Activated CD4-positive, alpha-beta T cell treated with anti-CD3 and anti-CD28 coated beads for 36 hours (primary cell): ENCODE measurements at regions of chr6 and their contacts with region 1.

Region 1: DNA sequence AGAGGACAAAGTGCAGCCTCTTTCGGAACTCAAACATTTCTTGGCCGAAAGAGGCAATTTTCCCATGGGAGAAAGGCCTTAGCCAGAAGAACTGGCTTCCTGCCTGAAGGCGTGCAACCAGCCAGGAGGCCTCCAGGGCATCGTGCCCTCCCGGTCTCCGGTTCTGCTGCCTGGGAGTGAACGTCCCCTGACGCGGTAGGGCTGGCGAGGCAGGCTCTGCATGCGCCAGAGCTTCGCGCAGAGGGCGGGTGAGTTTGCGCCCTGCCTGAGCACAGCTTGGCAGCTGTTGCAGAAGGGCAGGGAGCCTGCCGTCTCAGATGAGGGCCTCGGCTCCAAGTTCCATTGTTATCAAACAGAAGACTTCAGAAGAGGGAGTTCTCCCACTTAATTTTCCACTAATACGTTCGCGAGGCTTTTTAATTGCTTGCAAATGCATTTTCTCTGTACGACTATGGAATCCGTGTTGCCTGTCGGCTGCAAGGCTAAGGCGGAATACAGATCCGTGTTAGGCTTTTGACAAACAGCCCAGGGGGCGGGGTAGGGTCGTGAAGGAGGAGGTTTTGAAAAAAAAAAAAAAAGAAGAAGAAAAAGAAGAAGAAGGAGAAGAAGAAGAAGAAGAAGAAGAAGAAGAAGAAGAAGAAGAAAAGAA is 5.5 kb upstream of the TFAP2D start:
- DNase-seq: no peak
- ATAC-seq: no peak
- H3K4me3 Mint-ChIP-seq: no peak overlapping the region
- H3K27ac Mint-ChIP-seq: no peak overlapping the region
- H3K4me1 Mint-ChIP-seq: no peaks in the 10 kb centered on the region
- H3K27me3 Mint-ChIP-seq: peaks cover 56% of the 10 kb centered on the region

Region 2: DNA sequence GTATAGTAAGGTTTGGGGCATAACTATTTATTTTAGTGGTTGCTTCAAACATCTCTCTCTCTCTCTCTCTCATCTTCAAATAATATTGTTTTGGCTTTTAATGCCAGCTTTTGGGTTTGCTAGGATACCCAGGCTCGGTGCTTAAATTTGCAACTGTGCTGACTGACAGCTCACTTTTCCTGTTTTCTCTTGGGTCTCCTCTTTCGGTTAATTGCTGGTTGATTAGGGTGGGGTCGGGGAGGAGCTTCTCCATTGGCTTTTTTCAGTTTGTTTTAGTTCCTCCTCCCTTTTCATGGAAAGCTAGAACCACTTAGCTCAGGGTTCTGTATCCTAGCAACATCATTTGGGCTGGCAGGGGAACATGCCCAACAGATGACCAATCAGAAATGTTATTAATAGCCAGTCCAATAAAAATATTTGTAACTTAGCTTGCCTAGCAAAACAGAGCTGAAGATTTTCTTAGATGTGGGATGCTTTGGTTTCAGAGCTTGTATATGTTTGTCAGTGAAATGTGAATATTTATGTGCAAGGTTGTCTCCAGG is 122.2 kb after region 1 on chr6:
- CTCF ChIA-PET with region 1: no interaction called
- POLR2A ChIA-PET with region 1: no interaction called
- intact Hi-C with region 1: loop called in 1 of 2 experiments (anchors 5 kb)
- DNase-seq: no peak
- ATAC-seq: no peak
- H3K4me3 Mint-ChIP-seq: no peak overlapping the region
- H3K27ac Mint-ChIP-seq: no peak overlapping the region
- H3K4me1 Mint-ChIP-seq: no peaks in the 10 kb centered on the region
- H3K27me3 Mint-ChIP-seq: peaks cover 54% of the 10 kb centered on the region